Heart left ventricle (tissue), 16 donors: ENCODE measurements at regions of chr14 and their contacts with region 1.

Region 1: GRCh38 chr14:53295985-53296582 is 143.0 kb upstream of the DDHD1 start:
- DNase-seq: no peak
- ATAC-seq: no peak
- H3K4me3 ChIP-seq: no peak overlapping the region
- H3K27ac ChIP-seq: no peak overlapping the region
- H3K4me1 ChIP-seq: no peaks in the 10 kb centered on the region
- H3K27me3 ChIP-seq: no peaks in the 10 kb centered on the region
- CTCF ChIP-seq: peak; percentile 52 to 87 (median 74)
- POLR2A ChIP-seq: no peak

Region 2: GRCh38 chr14:53062856-53063255 is 233.2 kb before region 1 on chr14:
- intact Hi-C with region 1: loop called in 2 of 10 experiments (anchors 10 kb)
- DNase-seq: no peak
- ATAC-seq: no peak
- H3K4me3 ChIP-seq: no peak overlapping the region
- H3K27ac ChIP-seq: no peak overlapping the region
- H3K4me1 ChIP-seq: no peaks in the 10 kb centered on the region
- H3K27me3 ChIP-seq: no peaks in the 10 kb centered on the region
- CTCF ChIP-seq: no peak
- POLR2A ChIP-seq: no peak

Region 3: DNA sequence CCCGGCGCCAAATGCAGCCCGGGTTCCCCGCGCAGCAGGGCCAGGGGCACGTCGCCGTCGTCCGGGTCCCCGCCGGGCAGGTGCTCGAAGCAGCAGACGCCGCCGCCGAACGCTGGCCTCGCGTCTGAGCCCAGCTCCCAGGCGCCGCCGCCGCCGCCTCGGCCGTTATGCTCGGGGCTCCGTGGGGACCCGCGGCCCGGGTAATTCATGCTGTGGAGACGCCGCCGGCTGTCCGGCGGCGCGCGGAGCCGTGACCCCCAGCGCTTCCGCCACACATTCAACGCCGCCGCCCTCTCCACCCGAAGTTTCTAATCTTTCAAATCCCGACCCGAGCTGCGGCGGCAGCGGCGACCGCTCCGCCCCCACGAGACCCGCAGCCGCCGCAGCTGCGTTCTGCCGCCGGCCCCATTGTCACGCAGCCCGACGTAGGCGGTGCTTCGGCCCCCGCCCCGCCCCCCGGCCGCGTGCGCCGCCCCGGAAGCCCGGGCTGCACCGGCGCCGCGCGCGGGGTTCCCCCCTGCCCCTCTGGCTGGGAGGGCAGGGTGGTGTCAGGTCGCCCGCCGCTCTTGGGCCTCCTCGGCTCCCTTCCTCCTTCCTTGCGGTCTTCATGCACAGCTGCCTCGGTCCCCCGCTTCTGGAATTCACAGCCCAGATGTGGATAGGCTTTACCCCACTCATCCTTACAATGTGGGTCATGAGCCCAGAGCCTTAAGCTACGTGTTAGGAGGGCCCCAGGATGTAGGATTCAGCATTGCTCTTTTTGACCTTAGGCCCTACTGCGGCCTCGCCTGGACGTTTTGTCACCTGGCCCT is 143.0 kb before region 1 on chr14 and contains the start of gene DDHD1:
- intact Hi-C with region 1: loop called in 2 of 10 experiments (anchors 5 to 10 kb)
- DNase-seq: peak; percentile 75 to 92 (median 85)
- ATAC-seq: peak; percentile 66 to 96 (median 92)
- H3K4me3 ChIP-seq: peak within 1 kb of the TSS; percentile 58 to 96 (median 88)
- H3K27ac ChIP-seq: peak within 1 kb of the TSS; percentile 80 to 95 (median 89)
- H3K4me1 ChIP-seq: peaks cover 0 to 41% (median 15%) of the 10 kb centered on the region in 12 donors
- H3K27me3 ChIP-seq: no peaks in the 10 kb centered on the region
- CTCF ChIP-seq: no peak
- POLR2A ChIP-seq: peak in 1 of 2 donors; percentile 64
- total RNA-seq, gene DDHD1: 5.9 to 12.1 (median 7.8) TPM

Region 4: DNA sequence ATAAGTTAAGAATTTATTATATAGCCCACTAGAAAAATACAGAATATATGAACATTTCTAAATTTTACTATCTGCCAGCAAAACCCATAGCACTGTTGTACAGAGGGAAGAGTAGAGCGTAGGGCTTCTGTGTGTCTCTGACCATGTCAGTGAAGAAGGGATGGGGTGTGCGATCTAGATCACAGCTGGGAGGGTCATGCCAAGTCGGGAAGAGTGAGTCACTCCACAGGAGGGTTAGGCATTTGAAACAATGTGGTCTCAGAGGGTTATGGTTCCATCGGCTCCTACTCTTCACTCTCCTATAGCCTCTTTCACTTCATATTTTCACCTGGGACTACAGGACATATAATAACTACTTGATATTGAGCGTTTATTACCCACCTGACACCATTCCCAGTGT is 42.1 kb after region 1 on chr14:
- intact Hi-C with region 1: no loop called
- DNase-seq: no peak
- ATAC-seq: no peak
- H3K4me3 ChIP-seq: no peak overlapping the region
- H3K27ac ChIP-seq: no peak overlapping the region
- H3K4me1 ChIP-seq: no peaks in the 10 kb centered on the region
- H3K27me3 ChIP-seq: no peaks in the 10 kb centered on the region
- CTCF ChIP-seq: no peak
- POLR2A ChIP-seq: no peak

Region 5: DNA sequence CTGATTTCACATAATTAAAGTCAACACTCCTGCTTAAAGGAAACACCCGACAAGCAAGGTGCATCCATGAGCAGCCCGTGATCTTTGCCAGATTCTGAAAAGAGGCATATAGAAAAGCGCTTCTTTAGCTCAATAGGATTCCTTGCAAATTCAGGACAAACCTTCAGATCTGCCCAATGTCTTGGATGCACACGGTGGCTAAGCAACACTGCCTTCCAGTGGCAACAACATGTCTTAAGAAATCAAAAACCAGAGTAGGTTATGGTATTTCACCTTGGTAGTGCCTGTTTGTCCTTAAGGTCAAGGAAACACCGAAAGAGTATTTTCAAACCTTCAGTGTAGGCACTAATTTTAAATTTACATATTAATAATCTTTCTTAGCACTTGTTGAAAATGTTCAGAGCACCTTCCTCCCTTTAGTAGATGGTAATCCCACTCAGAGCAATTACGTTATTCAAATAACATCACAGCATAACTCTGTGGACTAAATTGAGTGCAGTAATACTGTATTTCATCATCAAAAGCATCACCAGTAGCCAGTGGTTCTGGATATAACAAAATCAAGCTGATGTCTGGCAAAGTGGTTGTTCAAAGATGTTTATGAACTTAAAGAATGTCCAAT is 1042.7 kb after region 1 on chr14:
- intact Hi-C with region 1: loop called in 3 of 10 experiments (anchors 10 kb)
- DNase-seq: no peak
- ATAC-seq: no peak
- H3K4me3 ChIP-seq: no peak overlapping the region
- H3K27ac ChIP-seq: no peak overlapping the region
- H3K4me1 ChIP-seq: peaks cover 0 to 9% (median 0%) of the 10 kb centered on the region in 12 donors
- H3K27me3 ChIP-seq: no peaks in the 10 kb centered on the region
- CTCF ChIP-seq: peak in 8 of 12 donors; percentile 13 to 45 (median 26)
- POLR2A ChIP-seq: no peak